Prostate gland (tissue), 2 donors: ENCODE measurements at regions of chr5 and their contacts with region 1.

Region 1: DNA sequence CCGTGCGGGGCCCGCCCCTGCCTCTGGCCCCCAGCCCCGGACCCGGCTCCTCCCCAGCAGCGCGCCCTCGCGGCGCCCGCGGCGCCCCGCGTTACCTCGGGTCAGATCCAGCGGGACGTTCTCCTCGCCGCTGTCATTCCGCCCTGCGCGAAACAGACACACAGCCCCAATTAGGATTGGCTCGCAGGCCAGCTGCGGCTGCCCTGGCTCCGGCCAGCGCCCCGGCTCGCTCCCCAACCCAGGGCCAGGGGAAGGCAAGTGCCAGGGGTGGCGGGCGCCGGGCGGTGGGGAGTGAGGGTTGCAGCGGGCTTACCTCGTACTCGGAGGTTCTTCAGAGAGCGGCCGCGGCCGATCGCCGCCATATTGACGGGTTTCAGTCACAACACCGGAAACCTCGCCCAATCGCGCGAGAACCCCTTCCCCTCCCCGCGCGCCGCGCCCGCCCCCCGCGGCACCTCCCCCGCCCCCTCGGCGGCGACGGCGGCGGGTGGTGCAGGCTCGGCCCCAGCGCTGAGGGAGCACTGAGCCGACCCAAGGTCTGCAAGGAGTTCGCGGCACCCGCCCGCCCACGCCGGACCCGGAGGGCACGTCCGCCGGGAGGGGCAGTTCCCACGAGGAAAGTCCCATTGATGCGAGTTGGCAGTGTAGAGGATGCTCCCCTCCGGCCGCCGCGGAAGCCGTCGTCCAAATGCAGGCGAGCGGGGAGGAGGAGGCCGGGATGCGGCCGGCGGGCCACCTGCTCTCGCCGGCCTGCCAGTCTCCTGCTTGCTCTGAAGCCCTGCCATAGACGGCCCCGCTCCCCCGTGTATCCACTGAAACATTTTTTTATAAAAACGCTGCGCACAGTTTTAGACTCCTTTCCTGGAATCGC is at the start of gene RICTOR:
- DNase-seq: peak; percentile 87
- H3K4me3 ChIP-seq: peak within 1 kb of the TSS; percentile 98 to 99
- H3K27ac ChIP-seq: peak within 1 kb of the TSS; percentile 99 to 100
- H3K4me1 ChIP-seq: peaks cover 4% of the 10 kb centered on the region
- H3K27me3 ChIP-seq: no peaks in the 10 kb centered on the region
- CTCF ChIP-seq: no peak
- POLR2A ChIP-seq: peak; percentile 53
- total RNA-seq, gene RICTOR: 21.5 to 36.8 TPM

Region 2: DNA sequence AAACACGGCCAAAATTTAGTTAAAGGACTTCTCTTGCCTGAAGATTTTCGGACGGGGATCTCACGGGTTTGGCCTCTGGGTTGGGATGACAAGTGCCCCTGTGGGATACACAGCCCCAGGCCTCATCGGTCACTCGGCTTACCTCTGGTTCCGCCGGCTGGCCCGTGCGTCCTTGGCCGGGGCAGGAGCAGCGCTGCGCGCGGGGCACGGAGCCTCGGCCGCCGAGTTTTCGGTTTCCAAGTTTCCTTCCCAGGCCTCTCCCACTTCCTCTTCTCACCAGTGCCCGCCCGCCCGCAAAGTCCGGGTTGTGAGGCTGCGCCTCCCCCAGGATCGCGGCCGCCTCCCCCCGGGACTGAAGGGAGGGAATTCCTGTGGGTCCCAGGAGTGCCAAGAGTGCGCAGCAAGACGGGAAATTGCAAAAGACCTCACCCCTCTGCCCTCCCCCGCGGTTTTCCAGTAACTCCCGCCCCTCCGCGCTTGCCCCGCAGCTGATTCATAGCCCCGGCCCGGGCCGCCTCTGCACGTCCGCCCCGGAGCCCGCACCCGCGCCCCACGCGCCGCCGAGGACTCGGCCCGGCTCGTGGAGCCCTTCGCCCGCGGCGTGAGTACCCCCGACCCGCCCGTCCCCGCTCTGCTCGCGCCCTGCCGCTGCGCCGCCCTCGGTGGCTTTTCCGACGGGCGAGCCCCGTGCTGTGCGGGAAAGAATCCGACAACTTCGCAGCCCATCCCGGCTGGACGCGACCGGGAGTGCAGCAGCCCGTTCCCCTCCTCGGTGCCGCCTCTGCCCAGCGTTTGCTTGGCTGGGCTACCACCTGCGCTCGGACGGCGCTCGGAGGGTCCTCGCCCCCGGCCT is 228.5 kb before region 1 on chr5 and contains the start of gene OSMR:
- intact Hi-C with region 1: loop called (anchors 5 kb)
- DNase-seq: peak; percentile 93
- H3K4me3 ChIP-seq: peak within 1 kb of the TSS; percentile 71 to 75
- H3K27ac ChIP-seq: peak within 1 kb of the TSS; percentile 90 to 94
- H3K4me1 ChIP-seq: no peaks in the 10 kb centered on the region
- H3K27me3 ChIP-seq: no peaks in the 10 kb centered on the region
- CTCF ChIP-seq: peak in 1 of 4 experiments; percentile 10
- POLR2A ChIP-seq: peak; percentile 53
- total RNA-seq, gene OSMR: 14.3 to 21.6 TPM